Astrocyte of the cerebellum (primary cell): ENCODE measurements at regions of chr12 and their contacts with region 1.

Region 1: DNA sequence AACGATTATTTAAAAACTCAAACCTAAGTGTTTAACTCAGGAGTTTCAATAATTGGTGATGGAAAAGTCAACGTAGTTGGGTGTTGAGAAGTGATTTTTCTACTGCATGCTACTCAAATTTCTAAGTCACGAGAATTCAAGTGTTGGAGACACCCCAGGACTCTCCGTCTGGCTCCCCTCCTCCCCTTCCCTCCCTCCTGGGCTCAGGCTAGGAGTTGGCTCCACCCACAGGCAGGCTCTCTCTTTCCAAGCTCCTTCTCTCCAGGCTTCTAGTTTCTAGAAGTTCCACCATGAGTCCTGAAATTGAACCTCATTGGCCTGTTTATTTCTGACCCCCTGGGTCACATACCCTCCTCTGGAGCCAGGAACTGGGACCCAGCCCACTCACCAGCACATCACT is 73.0 kb downstream of the TMEM132D start:
- DNase-seq: no peak
- H3K4me3 ChIP-seq: no peak overlapping the region
- CTCF ChIP-seq: no peak

Region 2: GRCh38 chr12:129772501-129773493 is 58.0 kb before region 1 on chr12:
- in situ Hi-C with region 1: loop called (anchors 10 kb)
- DNase-seq: peak; percentile 79
- H3K4me3 ChIP-seq: no peak overlapping the region
- CTCF ChIP-seq: peak; percentile 10

Region 3: DNA sequence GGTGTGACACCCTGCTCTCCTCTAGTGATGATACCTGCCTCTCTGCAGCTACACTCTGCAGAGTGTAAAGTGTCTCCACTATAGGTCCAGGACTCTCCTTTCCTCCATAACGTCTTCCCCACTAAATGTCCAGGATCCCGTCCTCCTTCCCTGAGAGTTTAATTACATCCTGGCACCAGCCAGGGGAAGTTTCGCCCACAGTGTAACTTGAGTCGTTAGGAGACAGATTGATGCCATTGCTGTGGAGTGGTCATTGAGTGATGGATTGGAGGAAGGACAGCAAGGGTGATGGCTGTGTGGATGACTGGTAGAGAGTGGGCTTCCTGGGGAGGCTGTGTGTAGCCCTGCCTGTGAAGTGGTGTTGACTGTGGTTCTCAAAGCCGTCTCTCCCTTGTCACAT is 157.0 kb after region 1 on chr12:
- in situ Hi-C with region 1: no loop called
- DNase-seq: no peak
- H3K4me3 ChIP-seq: no peak overlapping the region
- CTCF ChIP-seq: no peak